Ascending aorta (tissue), 2 donors: ENCODE measurements at regions of chr22 and their contacts with region 1.

Region 1: DNA sequence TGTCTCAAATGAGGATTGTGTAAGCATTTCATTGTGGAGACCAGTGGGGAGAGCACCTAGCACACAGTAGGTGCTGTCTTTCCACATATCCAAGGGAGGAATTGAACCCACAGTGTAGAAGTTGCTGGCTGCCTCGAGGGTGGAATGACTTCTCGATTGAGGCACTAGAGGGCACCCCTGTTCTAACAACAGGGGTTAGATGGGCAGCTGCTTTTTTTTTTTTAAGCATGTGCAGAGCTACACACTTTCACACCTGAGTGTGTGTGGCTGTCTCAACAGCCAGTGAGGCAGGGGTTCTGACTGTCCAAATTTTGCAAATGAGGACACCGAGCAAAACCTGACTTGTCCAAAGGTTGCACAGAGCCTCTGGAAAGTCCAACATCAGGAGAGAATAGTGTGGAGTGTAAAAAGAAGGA is 118.2 kb upstream of the CRYBB3 start:
- DNase-seq: no peak
- H3K4me3 ChIP-seq: no peak overlapping the region
- H3K27ac ChIP-seq: peak overlapping the region; percentile 91 to 96
- H3K4me1 ChIP-seq: peaks cover 58 to 92% of the 10 kb centered on the region in 2 donors
- H3K27me3 ChIP-seq: no peaks in the 10 kb centered on the region
- CTCF ChIP-seq: peak; percentile 29 to 76 (median 58)

Region 2: DNA sequence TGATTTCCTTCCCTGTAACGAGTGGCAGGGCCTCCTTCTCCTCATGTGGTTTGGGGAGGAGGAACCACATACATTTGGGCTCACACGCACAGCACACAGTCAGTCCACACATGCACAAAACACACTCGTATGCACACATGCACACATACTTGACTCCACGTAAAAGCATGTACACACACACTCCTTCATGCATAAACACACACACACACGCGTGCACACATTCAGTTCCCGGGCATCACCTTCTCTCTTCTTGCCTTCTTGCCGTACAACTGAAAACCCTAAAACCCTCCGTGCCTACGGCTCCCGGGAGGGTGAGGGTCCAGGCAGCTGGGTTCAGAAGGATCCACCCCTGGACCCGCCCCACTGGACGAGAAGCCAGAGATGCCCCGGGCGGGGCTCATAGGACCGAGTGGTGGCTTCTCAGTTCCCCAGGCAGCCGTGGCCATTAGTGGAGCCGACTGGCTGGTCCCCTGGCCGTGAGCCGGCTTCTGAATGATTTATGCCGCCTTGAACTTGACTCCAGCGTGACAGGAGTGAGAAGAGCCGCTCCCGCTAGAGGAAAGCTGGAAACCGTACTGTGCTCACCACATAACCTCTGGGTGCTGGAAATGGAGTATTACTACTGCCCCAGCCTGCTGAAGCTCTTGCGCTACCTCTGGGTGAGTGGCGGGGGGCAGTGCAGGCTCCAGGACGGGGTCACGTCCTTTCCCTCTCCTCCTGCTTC is 11.5 kb before region 1 on chr22:
- intact Hi-C with region 1: loop called (anchors 2 kb)
- DNase-seq: peak in 1 of 2 donors; percentile 81
- H3K4me3 ChIP-seq: peak overlapping the region; percentile 51 to 72
- H3K27ac ChIP-seq: peak overlapping the region; percentile 94 to 96
- H3K4me1 ChIP-seq: peaks cover 23 to 40% of the 10 kb centered on the region in 2 donors
- H3K27me3 ChIP-seq: no peaks in the 10 kb centered on the region
- CTCF ChIP-seq: no peak

Region 3: GRCh38 chr22:25098445-25099081 is 17.1 kb after region 1 on chr22:
- intact Hi-C with region 1: loop called (anchors 1 kb)
- DNase-seq: no peak
- H3K4me3 ChIP-seq: no peak overlapping the region
- H3K27ac ChIP-seq: peak overlapping the region; percentile 82 to 91
- H3K4me1 ChIP-seq: peaks cover 16 to 56% of the 10 kb centered on the region in 2 donors
- H3K27me3 ChIP-seq: no peaks in the 10 kb centered on the region
- CTCF ChIP-seq: no peak

Region 4: GRCh38 chr22:25110846-25111578 is 29.6 kb after region 1 on chr22:
- intact Hi-C with region 1: loop called (anchors 1 kb)
- DNase-seq: peak; percentile 51 to 83
- H3K4me3 ChIP-seq: peak overlapping the region; percentile 58 to 64
- H3K27ac ChIP-seq: peak overlapping the region; percentile 90 to 93
- H3K4me1 ChIP-seq: peaks cover 13 to 49% of the 10 kb centered on the region in 2 donors
- H3K27me3 ChIP-seq: no peaks in the 10 kb centered on the region
- CTCF ChIP-seq: peak; percentile 44 to 64 (median 45)

Region 5: DNA sequence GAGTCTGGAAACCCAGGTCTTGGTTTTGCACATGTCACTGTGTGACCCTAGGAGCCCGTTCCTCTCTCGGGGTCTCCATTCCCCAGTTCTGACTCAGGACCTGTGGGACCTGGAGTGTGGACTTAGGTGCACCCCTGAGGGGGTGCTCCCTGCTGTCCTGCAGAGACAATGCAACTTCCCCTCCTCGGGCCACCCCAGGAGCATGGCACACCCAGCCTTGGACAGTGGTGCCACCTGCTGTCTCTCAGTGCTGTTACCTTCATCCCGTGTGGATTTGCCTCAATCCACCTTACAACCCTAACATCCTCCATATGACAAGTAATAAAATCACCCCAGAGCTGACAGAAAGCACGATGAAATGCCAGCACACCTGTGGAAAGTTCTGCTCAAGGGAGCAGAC is 90.7 kb after region 1 on chr22:
- intact Hi-C with region 1: loop called (anchors 5 kb)
- DNase-seq: no peak
- H3K4me3 ChIP-seq: no peak overlapping the region
- H3K27ac ChIP-seq: no peak overlapping the region
- H3K4me1 ChIP-seq: no peaks in the 10 kb centered on the region
- H3K27me3 ChIP-seq: no peaks in the 10 kb centered on the region
- CTCF ChIP-seq: peak; percentile 17 to 41 (median 38)

Region 6: GRCh38 chr22:25497181-25497641 is 415.8 kb after region 1 on chr22:
- intact Hi-C with region 1: no loop called
- DNase-seq: no peak
- H3K4me3 ChIP-seq: no peak overlapping the region
- H3K27ac ChIP-seq: no peak overlapping the region
- H3K4me1 ChIP-seq: no peaks in the 10 kb centered on the region
- H3K27me3 ChIP-seq: no peaks in the 10 kb centered on the region
- CTCF ChIP-seq: no peak